ENCODE measurements at regions of chr6 and their contacts with region 1.

Region 1: DNA sequence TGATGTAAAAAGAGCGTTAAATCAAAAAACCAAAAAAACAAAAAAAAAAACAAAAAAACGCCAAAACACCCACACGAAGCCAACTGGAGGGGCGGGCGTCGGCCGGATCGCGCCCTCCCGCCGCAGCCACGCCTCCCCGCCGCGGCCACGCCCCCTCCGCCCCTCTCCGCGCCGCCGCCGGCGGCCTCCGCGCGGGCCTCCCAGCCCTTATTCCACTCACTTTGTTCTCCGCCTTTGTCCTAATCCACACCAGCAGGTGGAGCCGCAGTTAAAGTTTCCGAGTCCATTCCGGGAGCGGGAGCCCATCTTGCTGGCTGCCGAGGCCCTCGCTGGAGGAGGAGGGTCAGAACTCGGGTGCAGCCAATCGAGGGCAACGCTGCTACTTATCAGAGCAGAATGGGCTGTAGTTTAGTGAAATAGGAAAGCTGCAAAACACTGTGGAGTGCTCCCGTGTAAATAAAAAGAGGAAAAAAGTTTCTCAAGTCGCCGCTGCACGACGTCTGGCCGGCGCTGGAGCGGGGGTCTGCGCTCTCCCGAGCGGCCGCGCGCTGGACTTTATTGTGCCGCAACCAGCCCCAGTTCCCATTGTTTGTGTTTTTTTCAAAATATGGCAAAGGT is at the start of gene ASF1A:
- DNase-seq: peak; percentile 92
- ATAC-seq: peak; percentile 66
- H3K4me3 ChIP-seq: peak within 1 kb of the TSS; percentile 84 to 99 (median 91)
- H3K4me3 Mint-ChIP-seq: peak within 1 kb of the TSS; percentile 91
- H3K27ac ChIP-seq: peak within 1 kb of the TSS; percentile 79 to 84
- H3K27ac Mint-ChIP-seq: peak within 1 kb of the TSS; percentile 95
- H3K4me1 ChIP-seq: peaks cover 33 to 34% of the 10 kb centered on the region in 2 donors
- H3K4me1 Mint-ChIP-seq: peaks cover 58% of the 10 kb centered on the region
- H3K27me3 ChIP-seq: no peaks in the 10 kb centered on the region
- H3K27me3 Mint-ChIP-seq: no peaks in the 10 kb centered on the region
- CTCF ChIP-seq: no peak
- total RNA-seq, gene ASF1A: 25.3 and 27.3 TPM in 2 replicates

Region 2: DNA sequence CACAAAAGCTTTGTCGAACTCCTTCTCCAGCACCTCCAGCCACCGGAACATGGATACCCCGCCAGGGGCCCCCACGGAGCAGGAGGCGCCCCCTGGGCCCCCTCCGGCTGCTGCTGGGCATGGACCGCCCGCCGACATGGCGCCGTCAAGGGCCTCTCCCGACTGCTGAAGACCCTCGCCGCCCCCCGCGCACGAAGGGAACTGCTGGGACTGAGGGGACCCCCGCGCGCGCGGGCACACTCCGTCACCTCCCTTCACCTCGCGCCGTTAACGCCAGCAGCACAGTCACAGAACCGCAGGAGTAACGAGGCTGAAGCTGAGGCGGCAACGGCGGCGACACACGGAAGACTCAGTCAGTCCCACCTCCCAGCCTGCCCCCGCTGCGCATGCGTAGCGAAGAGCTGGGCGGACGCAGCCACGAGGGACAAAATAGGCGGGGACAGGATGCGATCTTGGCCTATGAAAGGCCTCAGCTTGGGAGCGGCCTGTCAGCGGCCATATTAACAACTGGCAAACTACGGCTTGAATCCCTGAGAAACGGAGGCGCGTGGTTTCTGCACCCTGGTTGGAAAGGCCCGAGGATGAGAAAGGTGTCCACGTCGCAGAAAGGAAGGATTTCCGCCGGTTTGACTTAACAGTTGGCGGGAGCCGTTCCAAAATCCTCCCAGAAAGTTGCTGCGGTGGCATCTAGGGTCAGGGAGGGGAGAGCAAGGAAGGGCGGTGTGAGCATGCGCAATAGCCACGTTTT is 1291.6 kb before region 1 on chr6 and contains the start of gene GOPC:
- CTCF ChIA-PET with region 1: no interaction called
- POLR2A ChIA-PET with region 1: no interaction called
- intact Hi-C with region 1: loop called (anchors 5 kb)
- DNase-seq: peak; percentile 98
- ATAC-seq: peak; percentile 95
- H3K4me3 ChIP-seq: peak within 1 kb of the TSS; percentile 86 to 96 (median 91)
- H3K4me3 Mint-ChIP-seq: peak within 1 kb of the TSS; percentile 100
- H3K27ac ChIP-seq: peak within 1 kb of the TSS; percentile 70 to 80
- H3K27ac Mint-ChIP-seq: peak within 1 kb of the TSS; percentile 97
- H3K4me1 ChIP-seq: peaks cover 20 to 25% of the 10 kb centered on the region in 2 donors
- H3K4me1 Mint-ChIP-seq: peaks cover 45% of the 10 kb centered on the region
- H3K27me3 ChIP-seq: no peaks in the 10 kb centered on the region
- H3K27me3 Mint-ChIP-seq: peaks cover 3% of the 10 kb centered on the region
- CTCF ChIP-seq: peak; percentile 35
- total RNA-seq, gene GOPC: 25.0 and 26.7 TPM in 2 replicates

Region 3: GRCh38 chr6:118565311-118565960 is 328.5 kb before region 1 on chr6:
- CTCF ChIA-PET with region 1: interaction called, 7 read pairs
- POLR2A ChIA-PET with region 1: no interaction called
- intact Hi-C with region 1: loop called (anchors 10 kb)
- DNase-seq: peak; percentile 81
- ATAC-seq: peak; percentile 94
- H3K4me3 ChIP-seq: no peak overlapping the region
- H3K4me3 Mint-ChIP-seq: no peak overlapping the region
- H3K27ac ChIP-seq: peak overlapping the region in 1 of 2 donors; percentile 49
- H3K27ac Mint-ChIP-seq: peak overlapping the region; percentile 5
- H3K4me1 ChIP-seq: peaks cover 6% of the 10 kb centered on the region in 2 donors
- H3K4me1 Mint-ChIP-seq: peaks cover 9% of the 10 kb centered on the region
- H3K27me3 ChIP-seq: no peaks in the 10 kb centered on the region
- H3K27me3 Mint-ChIP-seq: no peaks in the 10 kb centered on the region
- CTCF ChIP-seq: peak; percentile 85

Region 4: DNA sequence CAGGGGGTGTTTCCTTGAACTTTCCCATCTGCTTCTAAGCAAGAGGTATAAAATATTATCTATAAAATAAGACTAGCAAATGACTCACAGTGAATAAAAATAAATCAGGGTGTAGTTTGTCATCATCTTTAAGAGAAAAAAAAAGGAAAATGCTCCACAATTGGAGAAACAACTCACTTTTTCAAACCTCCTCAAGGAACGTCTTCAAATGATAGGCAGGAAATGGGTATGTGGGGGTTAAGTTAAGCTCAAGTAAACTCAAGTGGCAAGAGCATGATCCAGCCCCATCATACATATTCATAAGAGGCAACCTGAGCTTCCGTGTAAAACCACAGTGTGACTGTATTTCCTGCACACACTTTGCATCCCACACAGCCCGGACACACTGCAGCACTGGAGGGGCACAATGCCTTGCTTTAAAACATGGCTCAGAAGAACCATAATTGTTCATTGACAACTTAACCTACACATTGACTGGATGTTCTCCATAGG is 184.0 kb before region 1 on chr6:
- CTCF ChIA-PET with region 1: interaction called, 3 read pairs
- POLR2A ChIA-PET with region 1: interaction called, 5 read pairs
- intact Hi-C with region 1: loop called (anchors 5 kb)
- DNase-seq: peak; percentile 86
- ATAC-seq: peak; percentile 93
- H3K4me3 ChIP-seq: peak overlapping the region; percentile 59 to 93 (median 83)
- H3K4me3 Mint-ChIP-seq: peak overlapping the region; percentile 97
- H3K27ac ChIP-seq: peak overlapping the region; percentile 62 to 86
- H3K27ac Mint-ChIP-seq: peak overlapping the region; percentile 95
- H3K4me1 ChIP-seq: peaks cover 54 to 58% of the 10 kb centered on the region in 2 donors
- H3K4me1 Mint-ChIP-seq: peaks cover 68% of the 10 kb centered on the region
- H3K27me3 ChIP-seq: no peaks in the 10 kb centered on the region
- H3K27me3 Mint-ChIP-seq: no peaks in the 10 kb centered on the region
- CTCF ChIP-seq: no peak

Region 5: DNA sequence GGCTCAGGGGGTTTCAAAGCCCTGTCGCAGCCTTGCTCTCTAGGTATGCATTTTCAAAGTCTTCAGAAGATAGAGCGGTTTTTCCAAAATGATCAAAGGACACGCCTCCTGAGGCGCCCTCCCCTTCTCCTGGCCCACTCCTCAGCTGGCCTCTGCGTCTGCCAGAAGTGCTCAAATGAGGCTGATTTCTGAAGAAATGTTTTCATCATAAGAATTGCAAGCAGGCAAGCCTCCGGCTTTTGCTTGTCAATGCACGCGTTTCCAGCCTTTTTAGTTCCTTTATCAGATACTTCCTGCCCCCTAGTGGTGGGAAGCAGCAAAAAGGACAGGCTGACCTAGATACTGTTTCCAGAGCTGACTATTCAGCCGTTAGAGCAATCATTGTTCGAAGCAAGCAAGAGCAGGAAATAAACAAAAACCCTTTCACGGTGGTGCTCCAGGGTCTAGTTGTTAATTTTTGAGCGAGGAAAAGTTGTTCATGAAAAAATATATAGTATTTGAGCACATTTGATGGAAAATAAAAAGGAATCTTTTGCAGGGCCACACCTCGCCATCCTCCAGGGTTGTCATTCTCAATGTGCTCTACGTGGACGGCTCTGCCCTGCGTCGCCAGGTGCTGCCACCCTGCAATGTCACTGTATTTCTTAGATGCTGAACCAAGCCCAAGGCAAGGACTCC is 93.4 kb before region 1 on chr6:
- CTCF ChIA-PET with region 1: interaction called, 25 read pairs
- POLR2A ChIA-PET with region 1: interaction called, 6 read pairs
- intact Hi-C with region 1: no loop called
- DNase-seq: peak; percentile 81
- ATAC-seq: peak; percentile 92
- H3K4me3 ChIP-seq: peak overlapping the region in 1 of 5 experiments; percentile 5
- H3K4me3 Mint-ChIP-seq: peak overlapping the region; percentile 47
- H3K27ac ChIP-seq: no peak overlapping the region
- H3K27ac Mint-ChIP-seq: no peak overlapping the region
- H3K4me1 ChIP-seq: peaks cover 7 to 18% of the 10 kb centered on the region in 2 donors
- H3K4me1 Mint-ChIP-seq: peaks cover 24% of the 10 kb centered on the region
- H3K27me3 ChIP-seq: no peaks in the 10 kb centered on the region
- H3K27me3 Mint-ChIP-seq: no peaks in the 10 kb centered on the region
- CTCF ChIP-seq: peak; percentile 98

Region 6: GRCh38 chr6:118881440-118882313 is 12.2 kb before region 1 on chr6:
- CTCF ChIA-PET with region 1: interaction called, 39 read pairs
- POLR2A ChIA-PET with region 1: interaction called, 4 read pairs
- intact Hi-C with region 1: loop called (anchors 1 kb)
- DNase-seq: peak; percentile 55
- ATAC-seq: peak; percentile 68
- H3K4me3 ChIP-seq: peak overlapping the region in 1 of 5 experiments; percentile 10
- H3K4me3 Mint-ChIP-seq: peak overlapping the region; percentile 42
- H3K27ac ChIP-seq: peak overlapping the region in 1 of 2 donors; percentile 61
- H3K27ac Mint-ChIP-seq: peak overlapping the region; percentile 86
- H3K4me1 ChIP-seq: peaks cover 20 to 24% of the 10 kb centered on the region in 2 donors
- H3K4me1 Mint-ChIP-seq: peaks cover 55% of the 10 kb centered on the region
- H3K27me3 ChIP-seq: no peaks in the 10 kb centered on the region
- H3K27me3 Mint-ChIP-seq: no peaks in the 10 kb centered on the region
- CTCF ChIP-seq: no peak

Region 7: GRCh38 chr6:119078376-119079282 is 184.7 kb after region 1 on chr6 and contains the start of gene FAM184A:
- CTCF ChIA-PET with region 1: no interaction called
- POLR2A ChIA-PET with region 1: no interaction called
- intact Hi-C with region 1: loop called (anchors 5 kb)
- DNase-seq: peak; percentile 78
- ATAC-seq: peak; percentile 71
- H3K4me3 ChIP-seq: peak within 1 kb of the TSS; percentile 49 to 68 (median 58)
- H3K4me3 Mint-ChIP-seq: peak within 1 kb of the TSS; percentile 91
- H3K27ac ChIP-seq: no peak within 1 kb of the TSS
- H3K27ac Mint-ChIP-seq: no peak within 1 kb of the TSS
- H3K4me1 ChIP-seq: peaks cover 6 to 12% of the 10 kb centered on the region in 2 donors
- H3K4me1 Mint-ChIP-seq: peaks cover 12% of the 10 kb centered on the region
- H3K27me3 ChIP-seq: peaks cover 2 to 25% (median 15%) of the 10 kb centered on the region in 4 experiments
- H3K27me3 Mint-ChIP-seq: peaks cover 26% of the 10 kb centered on the region
- CTCF ChIP-seq: peak; percentile 20
- total RNA-seq, gene FAM184A: 0.27 and 0.54 TPM in 2 replicates

Measured in B cell (primary cell).